H1 (cell line): ENCODE measurements at regions of chr19 and their contacts with region 1.

Region 1: DNA sequence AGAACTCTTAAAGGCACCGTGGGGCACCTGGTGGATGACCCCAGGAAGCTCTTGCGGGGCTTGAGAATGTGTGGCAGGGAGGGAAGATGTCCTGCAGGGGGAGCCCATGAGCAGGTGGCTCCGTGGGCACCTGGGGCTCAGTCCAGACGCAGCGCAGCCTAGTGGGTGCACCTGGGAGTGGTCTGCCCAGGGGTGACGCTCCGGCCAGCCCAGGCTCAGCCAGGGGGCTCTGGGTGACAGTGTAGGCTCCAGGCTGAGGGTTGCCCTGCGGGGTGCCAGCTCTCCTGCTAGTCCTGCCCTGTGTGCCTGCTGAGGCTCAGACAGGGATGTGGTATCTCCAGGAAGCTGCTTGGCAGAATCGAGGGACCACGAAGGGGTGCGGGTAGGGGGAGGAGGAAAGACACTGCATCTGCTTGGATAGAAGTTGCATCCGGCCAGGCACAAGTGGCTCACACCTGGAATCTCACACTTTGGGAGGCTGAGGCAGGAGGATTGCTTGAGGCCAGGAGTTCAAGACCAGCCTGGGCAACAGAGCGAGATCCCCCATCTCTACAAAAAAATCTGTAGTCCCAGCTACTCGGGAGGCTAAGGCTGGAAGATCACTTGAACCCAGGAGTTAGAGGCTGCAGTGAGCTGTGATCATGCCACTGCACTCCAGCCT is 15.0 kb upstream of the PGLS start:
- DNase-seq: peak; percentile 84 to 95
- H3K4me3 ChIP-seq: peak overlapping the region in 1 of 4 experiments; percentile 54; a peak in 1 of 8 replicates
- H3K27ac ChIP-seq: no peak overlapping the region
- H3K4me1 ChIP-seq: peaks cover 0 to 8% (median 4%) of the 10 kb centered on the region in 4 experiments; a peak in 3 of 7 replicates
- H3K27me3 ChIP-seq: no peaks in the 10 kb centered on the region
- CTCF ChIP-seq: peak; percentile 99 to 100 (median 100)
- EP300 ChIP-seq: no peak
- POLR2A ChIP-seq: no peak
- RAD21 ChIP-seq: peak; percentile 61 to 70

Region 2: DNA sequence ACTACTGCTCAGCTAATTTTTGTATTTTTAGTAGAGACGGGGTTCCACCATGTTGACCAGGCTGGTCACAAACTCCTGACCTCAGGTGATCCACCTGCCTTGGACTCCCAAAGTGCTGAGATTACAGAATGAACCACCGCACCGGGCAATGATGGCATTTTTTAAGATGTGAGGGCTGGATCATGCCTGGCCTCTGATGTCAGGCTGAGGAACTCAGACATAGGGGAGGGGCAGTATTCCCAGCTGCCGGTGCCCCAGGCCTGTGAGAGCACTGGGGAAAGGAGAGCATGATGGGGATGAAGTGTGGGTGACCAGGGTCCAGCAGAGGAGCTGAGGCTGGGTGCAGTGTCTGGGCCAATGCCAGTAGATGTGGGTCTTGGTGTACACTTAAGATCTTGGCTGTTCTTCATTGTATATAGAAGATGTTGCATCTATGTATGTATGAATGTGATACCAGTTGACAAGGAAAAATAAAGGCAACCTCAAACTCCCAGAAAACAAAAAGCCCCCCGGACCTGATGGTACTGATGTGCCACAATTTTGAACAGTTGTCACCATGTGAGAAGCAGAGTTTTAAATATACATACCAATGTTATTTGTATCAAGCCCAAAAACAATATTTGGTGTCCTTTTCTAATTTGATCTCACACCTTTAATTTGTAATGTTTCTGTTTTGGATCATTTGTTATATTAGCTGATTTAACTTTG is 115.9 kb before region 1 on chr19:
- CTCF ChIA-PET with region 1: no interaction called
- POLR2A ChIA-PET with region 1: no interaction called
- DNase-seq: no peak
- H3K4me3 ChIP-seq: no peak overlapping the region
- H3K27ac ChIP-seq: no peak overlapping the region
- H3K4me1 ChIP-seq: peaks cover 0 to 11% (median 6%) of the 10 kb centered on the region in 4 experiments; a peak in 5 of 7 replicates
- H3K27me3 ChIP-seq: no peaks in the 10 kb centered on the region
- CTCF ChIP-seq: no peak
- EP300 ChIP-seq: no peak
- POLR2A ChIP-seq: no peak
- RAD21 ChIP-seq: no peak

Region 3: GRCh38 chr19:17441241-17442021 is 55.0 kb before region 1 on chr19:
- CTCF ChIA-PET with region 1: interaction called, 11 read pairs
- POLR2A ChIA-PET with region 1: interaction called, 4 read pairs
- DNase-seq: peak in 1 of 2 experiments; percentile 59
- H3K4me3 ChIP-seq: no peak overlapping the region
- H3K27ac ChIP-seq: no peak overlapping the region
- H3K4me1 ChIP-seq: no peaks in the 10 kb centered on the region
- H3K27me3 ChIP-seq: no peaks in the 10 kb centered on the region; a peak in 1 of 7 replicates
- CTCF ChIP-seq: peak; percentile 58 to 83 (median 73)
- EP300 ChIP-seq: no peak
- POLR2A ChIP-seq: no peak
- RAD21 ChIP-seq: peak; percentile 84

Region 4: DNA sequence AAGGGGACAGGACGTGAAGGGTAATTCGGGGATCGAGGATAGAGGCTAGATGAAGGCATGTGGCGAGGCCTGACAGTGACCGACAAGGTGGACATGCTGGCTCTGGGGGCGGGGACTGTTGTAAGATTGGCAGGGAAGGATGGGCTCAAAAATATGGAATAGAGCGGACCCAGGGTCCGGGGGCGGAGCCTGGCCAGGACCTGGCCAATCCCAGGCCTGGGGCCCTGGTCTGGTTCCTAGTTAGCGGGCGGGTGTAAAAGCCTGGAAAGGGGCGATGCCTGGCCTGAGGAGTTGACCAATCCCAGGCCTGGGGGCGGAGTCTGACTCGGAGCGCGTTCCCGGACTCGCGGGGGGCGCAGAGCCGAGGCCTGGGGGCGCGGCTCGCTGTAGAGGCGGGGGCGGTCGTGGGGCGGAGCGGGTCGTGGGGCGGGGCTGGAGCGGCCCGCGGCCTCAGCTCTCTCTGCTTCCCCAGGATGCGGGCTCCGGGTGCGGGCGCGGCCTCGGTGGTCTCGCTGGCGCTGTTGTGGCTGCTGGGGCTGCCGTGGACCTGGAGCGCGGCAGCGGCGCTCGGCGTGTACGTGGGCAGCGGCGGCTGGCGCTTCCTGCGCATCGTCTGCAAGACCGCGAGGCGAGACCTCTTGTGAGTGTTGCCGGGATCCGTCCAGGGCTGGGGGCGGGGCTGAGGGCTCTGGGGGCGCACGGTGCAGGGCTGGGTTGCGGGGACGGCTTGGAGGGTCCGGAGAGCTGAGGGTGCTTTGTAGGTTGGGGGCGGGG is 26.2 kb before region 1 on chr19 and contains the start of gene SLC27A1:
- CTCF ChIA-PET with region 1: interaction called, 39 read pairs
- POLR2A ChIA-PET with region 1: interaction called, 4 read pairs
- DNase-seq: peak; percentile 96 to 97
- H3K4me3 ChIP-seq: peak within 1 kb of the TSS; percentile 70 to 84 (median 79)
- H3K27ac ChIP-seq: no peak within 1 kb of the TSS
- H3K4me1 ChIP-seq: peaks cover 0 to 20% (median 8%) of the 10 kb centered on the region in 4 experiments; a peak in 5 of 7 replicates
- H3K27me3 ChIP-seq: peaks cover 0 to 11% (median 5%) of the 10 kb centered on the region in 4 experiments; a peak in 3 of 7 replicates
- CTCF ChIP-seq: no peak
- EP300 ChIP-seq: no peak
- POLR2A ChIP-seq: peak in 1 of 2 experiments; percentile 54; a peak in 1 of 3 replicates
- RAD21 ChIP-seq: no peak
- total RNA-seq, gene SLC27A1: 7.3 and 7.5 TPM in 2 replicates

Region 5: DNA sequence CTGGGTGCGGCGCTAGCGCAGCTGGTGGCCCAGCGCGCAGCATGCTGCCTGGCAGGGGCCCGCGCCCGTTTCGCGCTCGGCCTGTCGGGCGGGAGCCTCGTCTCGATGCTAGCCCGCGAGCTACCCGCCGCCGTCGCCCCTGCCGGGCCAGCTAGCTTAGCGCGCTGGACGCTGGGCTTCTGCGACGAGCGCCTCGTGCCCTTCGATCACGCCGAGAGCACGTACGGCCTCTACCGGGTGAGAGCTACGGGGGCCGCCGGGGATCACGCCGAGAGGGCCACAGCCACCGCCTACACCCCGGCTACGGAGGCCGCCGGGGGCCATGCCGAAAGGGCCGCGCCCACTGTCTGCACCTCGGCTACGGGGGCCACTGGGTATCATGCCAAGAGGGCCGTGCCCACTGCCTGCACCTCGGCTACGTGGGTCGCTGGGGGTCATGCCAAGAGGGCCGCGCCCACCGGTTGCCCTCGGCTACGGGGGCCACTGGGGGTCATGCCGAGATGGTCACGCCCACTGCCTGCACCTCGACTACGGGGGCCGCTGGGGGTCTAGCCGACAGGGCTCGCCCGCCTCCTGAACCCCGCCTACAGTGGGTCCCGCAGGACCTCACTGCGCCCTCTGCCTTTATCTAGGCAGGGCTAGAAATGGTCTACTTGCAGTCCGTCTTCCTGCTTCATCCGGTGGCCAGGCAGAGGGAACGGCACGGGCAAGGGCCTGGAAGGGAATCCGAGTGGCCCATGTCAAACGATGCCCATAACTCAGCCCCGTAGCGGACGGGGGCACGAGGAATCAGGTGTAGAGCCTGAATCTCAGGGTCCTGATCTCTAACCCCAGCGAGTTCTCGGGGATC is 15.5 kb after region 1 on chr19:
- CTCF ChIA-PET with region 1: interaction called, 130 read pairs
- POLR2A ChIA-PET with region 1: interaction called, 20 read pairs
- DNase-seq: peak; percentile 71 to 91
- H3K4me3 ChIP-seq: peak overlapping the region; percentile 73 to 91 (median 79)
- H3K27ac ChIP-seq: peak overlapping the region; percentile 93
- H3K4me1 ChIP-seq: peaks cover 0 to 6% (median 2%) of the 10 kb centered on the region in 4 experiments; a peak in 3 of 7 replicates
- H3K27me3 ChIP-seq: no peaks in the 10 kb centered on the region; a peak in 1 of 7 replicates
- CTCF ChIP-seq: peak; percentile 38 to 39 (median 39)
- EP300 ChIP-seq: peak in 1 of 2 experiments; percentile 12; a peak in 1 of 3 replicates
- POLR2A ChIP-seq: peak in 1 of 2 experiments; percentile 45; a peak in 2 of 3 replicates
- RAD21 ChIP-seq: peak; percentile 21 to 35; a peak in 2 of 4 replicates

Region 6: DNA sequence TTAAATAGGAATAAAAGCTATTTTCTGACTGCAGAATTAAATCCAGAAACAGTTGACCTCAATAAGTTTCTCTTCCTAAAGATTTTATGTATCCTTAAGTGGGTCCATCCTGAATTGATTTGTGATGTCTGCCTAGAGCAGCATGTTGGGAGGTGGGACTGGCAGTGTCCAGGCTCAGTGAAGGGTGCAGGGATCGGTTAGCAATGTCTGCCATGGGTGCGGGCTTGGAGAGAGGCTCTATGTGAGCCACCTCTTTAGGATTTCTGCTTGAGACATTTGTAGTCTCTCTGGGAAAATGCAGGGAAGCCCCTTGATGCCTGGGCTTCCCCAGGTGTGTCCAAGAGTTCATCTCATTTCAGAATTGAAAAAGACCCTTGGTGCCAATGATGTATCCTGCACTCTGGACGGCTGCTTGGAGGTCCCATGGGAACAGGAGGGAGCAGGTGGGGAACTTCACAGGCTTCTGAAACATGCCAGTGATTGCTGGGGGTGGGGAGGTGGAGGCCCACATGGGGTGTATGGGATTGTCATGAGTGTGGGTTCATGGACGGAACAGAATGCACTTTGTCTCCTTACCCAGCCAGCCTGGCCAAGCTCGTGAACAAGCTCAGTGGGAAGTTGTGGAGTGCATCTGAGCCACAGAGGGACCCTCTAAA is 52.7 kb after region 1 on chr19:
- CTCF ChIA-PET with region 1: interaction called, 16 read pairs
- POLR2A ChIA-PET with region 1: no interaction called
- DNase-seq: no peak
- H3K4me3 ChIP-seq: no peak overlapping the region
- H3K27ac ChIP-seq: no peak overlapping the region
- H3K4me1 ChIP-seq: no peaks in the 10 kb centered on the region; a peak in 1 of 7 replicates
- H3K27me3 ChIP-seq: no peaks in the 10 kb centered on the region
- CTCF ChIP-seq: no peak
- EP300 ChIP-seq: no peak
- POLR2A ChIP-seq: no peak
- RAD21 ChIP-seq: no peak

Region 7: GRCh38 chr19:17572640-17573039 is 76.2 kb after region 1 on chr19:
- CTCF ChIA-PET with region 1: interaction called, 38 read pairs
- POLR2A ChIA-PET with region 1: no interaction called
- DNase-seq: no peak
- H3K4me3 ChIP-seq: no peak overlapping the region
- H3K27ac ChIP-seq: no peak overlapping the region
- H3K4me1 ChIP-seq: peaks cover 0 to 2% (median 2%) of the 10 kb centered on the region in 4 experiments; a peak in 6 of 7 replicates
- H3K27me3 ChIP-seq: no peaks in the 10 kb centered on the region
- CTCF ChIP-seq: no peak
- EP300 ChIP-seq: no peak
- POLR2A ChIP-seq: no peak
- RAD21 ChIP-seq: no peak